ENCODE measurements at regions of chr1 and their contacts with region 1.

Region 1: DNA sequence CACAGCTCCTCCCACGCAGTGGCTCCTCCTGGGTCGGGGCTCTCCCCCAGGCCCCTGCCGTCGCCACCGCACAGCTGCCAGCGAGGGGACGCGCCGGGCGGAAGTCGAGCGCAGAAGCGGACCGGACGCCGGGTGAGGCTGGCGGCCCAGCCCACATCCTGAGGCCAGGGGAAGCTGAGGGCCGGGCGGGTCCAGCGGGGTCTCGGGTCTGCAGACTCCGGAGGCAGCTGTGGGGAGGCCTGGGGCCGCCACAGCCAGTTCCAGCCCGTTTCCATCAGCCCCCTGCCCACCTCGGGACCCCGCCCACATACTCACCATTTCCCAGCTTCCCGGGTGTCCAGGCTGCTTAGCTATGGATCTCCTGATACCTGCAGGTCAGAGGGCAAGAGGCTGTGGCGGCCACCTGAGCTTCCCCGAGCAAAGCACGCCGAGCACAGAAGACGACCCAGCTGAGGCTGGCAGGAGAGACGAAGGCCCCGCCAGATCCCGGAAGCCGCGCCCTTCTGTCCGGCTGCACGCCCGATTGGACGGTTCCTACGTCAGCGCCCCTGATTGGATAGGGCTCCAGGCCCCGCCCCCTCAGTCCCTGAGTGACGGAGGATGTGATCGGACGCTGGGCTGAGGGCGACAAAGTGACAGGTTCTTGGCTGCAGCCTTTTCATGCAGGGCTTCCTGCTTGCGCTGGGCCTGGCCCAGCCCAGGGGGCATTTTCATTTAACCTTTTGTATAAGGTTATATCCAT is 38.7 kb upstream of the ZNF124 start:
- DNase-seq: peak; percentile 98
- H3K4me3 Mint-ChIP-seq: peak overlapping the region; percentile 90
- H3K27ac Mint-ChIP-seq: peak overlapping the region; percentile 93
- H3K4me1 Mint-ChIP-seq: peaks cover 56% of the 10 kb centered on the region
- H3K27me3 Mint-ChIP-seq: no peaks in the 10 kb centered on the region

Region 2: DNA sequence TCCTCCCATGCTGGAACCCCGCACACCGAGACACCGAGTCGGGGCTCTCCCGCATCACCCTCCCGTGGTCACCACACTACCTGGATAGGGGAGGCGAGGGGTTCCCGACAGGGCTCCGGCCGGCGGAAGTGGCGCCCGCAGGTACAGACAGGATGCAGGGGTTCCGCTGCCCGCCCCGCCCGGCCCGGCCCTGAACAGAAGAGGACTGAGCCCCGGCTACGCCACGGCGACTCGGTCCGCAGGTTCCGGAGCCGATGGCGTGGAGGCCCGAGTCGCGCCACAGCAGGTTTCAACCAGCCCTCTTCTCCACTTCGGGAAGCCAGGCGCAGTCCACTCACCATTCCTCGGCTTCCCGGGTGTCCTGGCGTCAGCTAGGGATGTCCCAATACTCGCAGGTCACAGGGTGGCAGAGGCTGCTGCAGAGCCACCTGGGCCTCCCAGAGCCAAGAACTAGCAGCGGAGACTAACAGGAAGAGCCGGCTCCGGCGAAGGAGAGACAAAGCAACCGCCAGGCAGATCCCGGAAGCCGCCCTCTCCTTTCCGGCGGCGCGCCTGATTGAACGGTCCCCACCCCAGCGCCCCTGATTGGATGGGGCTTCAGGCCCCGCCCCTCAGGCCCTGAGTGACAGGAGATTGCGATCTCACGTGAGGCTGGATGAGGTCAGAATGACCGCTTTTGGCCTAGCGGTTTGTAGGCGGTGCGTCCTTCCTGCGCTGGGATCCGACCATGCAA is 106.5 kb before region 1 on chr1 and contains the start of gene ZNF669:
- CTCF ChIA-PET with region 1: no interaction called
- intact Hi-C with region 1: loop called (anchors 1 kb)
- DNase-seq: peak; percentile 97
- H3K4me3 Mint-ChIP-seq: peak within 1 kb of the TSS; percentile 88
- H3K27ac Mint-ChIP-seq: peak within 1 kb of the TSS; percentile 90
- H3K4me1 Mint-ChIP-seq: peaks cover 17% of the 10 kb centered on the region
- H3K27me3 Mint-ChIP-seq: peaks cover 12% of the 10 kb centered on the region
- total RNA-seq, gene ZNF669: 8.2 to 8.4 TPM

Region 3: GRCh38 chr1:247172996-247173395 is 37.6 kb before region 1 on chr1:
- CTCF ChIA-PET with region 1: no interaction called
- intact Hi-C with region 1: loop called (anchors 2 kb)
- DNase-seq: no peak
- H3K4me3 Mint-ChIP-seq: no peak overlapping the region
- H3K27ac Mint-ChIP-seq: no peak overlapping the region
- H3K4me1 Mint-ChIP-seq: peaks cover 18% of the 10 kb centered on the region
- H3K27me3 Mint-ChIP-seq: no peaks in the 10 kb centered on the region

Region 4: DNA sequence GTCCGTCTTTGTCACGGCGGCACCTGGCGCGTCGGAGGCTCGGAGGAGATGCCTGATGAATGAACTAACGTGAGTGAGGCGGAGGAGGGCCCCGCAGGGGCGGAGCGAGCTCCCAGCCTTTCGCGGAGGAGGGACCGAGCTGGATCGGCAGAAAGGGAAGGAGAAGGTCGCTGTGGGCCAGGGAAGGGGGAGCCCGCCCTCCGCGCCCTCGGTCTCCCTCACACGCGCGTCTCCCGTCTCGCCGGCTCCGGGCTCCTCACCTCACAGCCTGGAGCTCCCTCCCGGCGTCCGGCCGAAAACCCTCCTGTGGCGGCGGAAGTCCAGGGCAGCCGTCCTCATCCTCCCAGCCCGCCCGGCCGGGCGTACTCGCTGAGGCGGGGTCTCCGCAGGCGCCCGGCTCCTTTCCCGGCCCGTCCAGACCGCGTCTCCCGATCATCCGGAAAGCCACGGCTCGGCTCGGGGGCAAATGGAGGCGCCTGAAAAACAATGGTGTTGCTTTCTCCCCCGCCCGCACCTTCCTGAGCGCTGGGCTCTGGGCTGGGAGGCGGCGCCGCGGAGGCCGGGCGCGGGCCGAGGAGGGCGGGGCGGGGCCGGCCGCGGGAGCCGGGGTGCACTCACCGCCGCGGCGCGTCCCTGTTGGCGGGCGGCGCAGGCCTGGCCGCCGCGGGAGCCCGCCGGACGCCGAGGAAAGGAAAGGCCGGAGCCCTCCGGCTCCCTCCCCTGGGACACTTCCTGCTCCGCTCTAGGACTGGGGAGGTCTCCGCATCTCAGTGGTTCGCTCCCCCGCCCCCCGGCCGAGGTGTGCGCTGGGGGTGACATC is 120.8 kb after region 1 on chr1 and contains the start of gene ZNF496:
- CTCF ChIA-PET with region 1: no interaction called
- intact Hi-C with region 1: loop called (anchors 1 kb)
- DNase-seq: peak; percentile 80
- H3K4me3 Mint-ChIP-seq: peak within 1 kb of the TSS; percentile 86
- H3K27ac Mint-ChIP-seq: peak within 1 kb of the TSS; percentile 75
- H3K4me1 Mint-ChIP-seq: peaks cover 30% of the 10 kb centered on the region
- H3K27me3 Mint-ChIP-seq: no peaks in the 10 kb centered on the region
- total RNA-seq, gene ZNF496: 9.8 to 10.6 TPM

Region 5: DNA sequence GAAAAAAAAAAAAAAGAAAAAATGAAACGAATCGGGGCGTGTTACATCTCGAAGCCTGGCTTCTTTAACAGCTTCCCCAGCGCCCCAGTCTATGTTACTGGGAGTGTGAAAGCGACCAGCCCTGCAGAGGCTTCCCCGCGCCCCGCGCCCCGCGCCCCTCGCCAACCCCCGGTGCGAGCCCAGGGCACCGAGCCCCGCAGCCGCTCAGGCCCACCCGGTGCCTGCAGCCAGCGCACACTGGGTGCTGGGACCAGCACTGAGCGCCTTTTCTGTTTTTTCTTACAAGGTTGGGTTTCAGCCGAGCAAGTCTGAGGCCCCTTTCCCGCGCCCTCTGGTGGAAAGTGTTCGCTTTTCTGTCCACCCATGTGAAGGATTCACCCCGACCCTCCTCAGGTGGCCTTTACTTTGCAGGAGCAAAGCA is 163.2 kb after region 1 on chr1:
- CTCF ChIA-PET with region 1: no interaction called
- intact Hi-C with region 1: no loop called
- DNase-seq: peak; percentile 74
- H3K4me3 Mint-ChIP-seq: no peak overlapping the region
- H3K27ac Mint-ChIP-seq: no peak overlapping the region
- H3K4me1 Mint-ChIP-seq: peaks cover 3% of the 10 kb centered on the region
- H3K27me3 Mint-ChIP-seq: peaks cover 6% of the 10 kb centered on the region

Measured in activated naive CD4-positive, alpha-beta T cell treated with anti-CD3 and anti-CD28 coated beads for 36 hours (primary cell).